Activated T-helper 2 cell treated with anti-CD3 and anti-CD28 coated beads, Interferon-gamma antibody, Interleukin-2, Interleukin-4, amounts not matched to agents 10 μg/mL and 5 μg/mL and 100 μg/mL, durations not matched to agents 14 hours and 24 hours and 36 hours (primary cell): ENCODE measurements at regions of chr1 and their contacts with region 1.

Region 1: GRCh38 chr1:24642481-24643361 is at the start of gene SRRM1:
- DNase-seq: peak; percentile 99
- H3K4me3 Mint-ChIP-seq: peak within 1 kb of the TSS; percentile 90
- H3K27ac Mint-ChIP-seq: peak within 1 kb of the TSS; percentile 97
- H3K4me1 Mint-ChIP-seq: peaks cover 38% of the 10 kb centered on the region
- H3K27me3 Mint-ChIP-seq: no peaks in the 10 kb centered on the region
- total RNA-seq, gene SRRM1: 212 and 223 TPM in 2 replicates

Region 2: GRCh38 chr1:23979878-23980724 is 662.6 kb before region 1 on chr1 and contains the start of gene SRSF10:
- intact Hi-C with region 1: loop called (anchors 10 kb)
- DNase-seq: peak; percentile 99
- H3K4me3 Mint-ChIP-seq: peak within 1 kb of the TSS; percentile 95
- H3K27ac Mint-ChIP-seq: peak within 1 kb of the TSS; percentile 98
- H3K4me1 Mint-ChIP-seq: peaks cover 36% of the 10 kb centered on the region
- H3K27me3 Mint-ChIP-seq: no peaks in the 10 kb centered on the region
- total RNA-seq, gene SRSF10: 213 and 217 TPM in 2 replicates

Region 3: DNA sequence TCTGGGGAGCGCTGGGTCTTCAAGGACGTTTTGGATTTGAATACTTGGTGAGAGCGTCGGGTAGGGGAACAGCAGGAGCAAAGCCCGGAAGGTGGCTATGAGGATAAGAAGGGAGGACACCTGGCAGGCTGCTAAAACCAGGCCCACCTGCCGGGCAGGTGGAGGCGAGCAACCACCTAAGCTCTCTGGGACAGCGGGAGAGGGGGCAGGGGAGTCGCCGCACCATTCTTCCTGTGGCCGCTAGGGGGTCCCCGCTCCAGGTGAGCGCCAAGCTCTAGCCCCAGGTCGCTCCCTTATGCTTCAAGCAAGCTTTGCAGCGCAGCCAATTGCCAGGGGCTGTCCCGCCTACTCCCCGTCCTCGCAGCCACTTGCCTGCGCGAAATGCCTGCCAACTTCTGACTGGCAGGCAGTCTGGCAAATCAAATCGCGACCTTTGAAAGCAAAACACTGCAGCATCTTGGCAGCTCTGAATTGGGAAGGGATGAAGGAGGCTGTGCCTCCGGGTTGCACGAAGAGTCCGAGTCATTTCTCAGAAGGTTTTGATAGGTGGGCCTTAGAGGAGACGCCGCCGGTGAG is 227.3 kb before region 1 on chr1 and contains the start of gene NIPAL3:
- intact Hi-C with region 1: loop called (anchors 2 kb)
- DNase-seq: peak; percentile 98
- H3K4me3 Mint-ChIP-seq: peak within 1 kb of the TSS; percentile 96
- H3K27ac Mint-ChIP-seq: peak within 1 kb of the TSS; percentile 87
- H3K4me1 Mint-ChIP-seq: peaks cover 44% of the 10 kb centered on the region
- H3K27me3 Mint-ChIP-seq: no peaks in the 10 kb centered on the region
- total RNA-seq, gene NIPAL3: 24.6 and 28.6 TPM in 2 replicates

Region 4: GRCh38 chr1:24541711-24542346 is 100.9 kb before region 1 on chr1:
- intact Hi-C with region 1: loop called (anchors 2 kb)
- DNase-seq: no peak
- H3K4me3 Mint-ChIP-seq: no peak overlapping the region
- H3K27ac Mint-ChIP-seq: peak overlapping the region; percentile 82
- H3K4me1 Mint-ChIP-seq: peaks cover 53% of the 10 kb centered on the region
- H3K27me3 Mint-ChIP-seq: no peaks in the 10 kb centered on the region

Region 5: DNA sequence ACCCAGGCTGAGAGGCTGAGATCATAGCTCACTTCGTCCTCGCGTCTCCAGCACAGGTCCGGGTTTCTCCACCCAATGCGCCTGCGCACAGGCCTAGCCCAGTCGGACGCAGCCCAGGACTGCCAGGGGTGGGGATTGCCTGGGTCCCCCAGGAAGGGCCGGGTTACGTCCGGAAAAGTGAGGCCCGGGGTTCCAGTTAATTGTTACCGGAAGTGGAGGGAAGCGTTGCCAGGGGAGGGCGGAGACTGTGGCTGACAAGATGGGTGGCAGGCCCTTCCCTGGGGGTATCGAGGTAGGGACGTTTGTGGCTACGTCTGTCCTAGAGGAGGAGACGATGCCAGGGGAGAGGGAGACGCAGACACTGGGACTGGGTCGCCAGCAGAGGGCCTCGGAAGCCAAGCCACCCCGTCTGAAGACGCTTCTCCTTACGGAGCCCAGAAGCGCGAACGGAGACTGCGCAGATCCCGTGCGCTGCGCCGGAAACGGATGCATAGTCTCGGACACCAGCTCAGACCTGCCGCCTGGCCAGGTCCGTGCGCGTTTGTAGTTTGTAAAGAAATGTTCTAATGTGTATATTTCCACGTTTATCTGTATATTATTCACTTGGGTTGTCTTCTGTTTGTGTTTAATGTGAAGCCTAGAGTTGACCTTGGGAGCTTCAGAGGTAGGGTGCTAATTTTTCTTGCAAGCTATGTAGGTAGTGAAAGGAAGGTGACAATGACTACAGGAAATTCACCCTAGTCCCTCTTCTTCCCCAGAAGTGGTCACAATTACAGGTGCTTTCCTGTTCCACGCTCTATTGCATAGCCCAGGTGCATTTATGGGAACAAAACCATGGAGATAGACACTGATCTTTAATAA is 597.2 kb after region 1 on chr1:
- intact Hi-C with region 1: loop called (anchors 10 kb)
- DNase-seq: peak; percentile 88
- H3K4me3 Mint-ChIP-seq: peak overlapping the region; percentile 83
- H3K27ac Mint-ChIP-seq: peak overlapping the region; percentile 95
- H3K4me1 Mint-ChIP-seq: peaks cover 38% of the 10 kb centered on the region
- H3K27me3 Mint-ChIP-seq: no peaks in the 10 kb centered on the region